HEK293 (cell line): ENCODE measurements at regions of chr6 and their contacts with region 1.

Region 1: DNA sequence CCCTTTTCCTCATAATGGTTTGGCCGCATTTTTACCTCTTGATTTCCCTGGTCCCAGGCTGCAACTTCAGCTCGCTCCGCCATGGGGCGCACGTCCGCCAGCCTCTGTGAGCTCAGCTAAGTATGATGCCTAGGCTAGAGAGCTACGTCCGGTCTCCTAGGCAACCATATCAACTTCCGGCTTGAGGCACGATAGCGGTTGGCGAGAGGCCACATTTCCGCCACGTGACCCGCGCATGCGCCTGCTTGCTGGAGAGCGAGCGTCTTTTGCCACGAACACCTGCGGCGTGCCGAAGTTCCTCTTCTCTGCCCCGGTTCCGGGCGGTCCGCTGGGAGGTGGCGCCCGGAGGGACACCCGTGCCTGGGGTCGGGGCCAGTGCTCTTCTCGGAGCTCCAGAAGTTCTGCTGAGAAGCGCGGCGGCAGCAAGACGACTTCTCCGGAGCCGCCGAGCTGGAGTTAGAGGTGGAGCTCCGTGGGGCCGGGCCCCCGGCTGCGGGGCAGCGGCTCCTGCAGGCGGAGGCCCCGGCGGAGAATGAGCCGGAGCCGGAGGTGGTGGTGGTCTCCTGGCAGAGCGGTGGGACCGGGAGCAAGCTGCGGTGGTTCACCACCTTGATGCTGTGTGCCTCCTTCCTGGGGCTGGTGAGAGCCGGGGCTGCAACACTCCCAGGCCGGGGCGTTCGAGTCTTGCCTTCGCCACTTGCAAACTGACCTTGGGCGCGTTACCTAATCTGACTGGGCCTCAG is 172.0 kb downstream of the SLC16A10 start:
- H3K4me3 ChIP-seq: peak overlapping the region; percentile 82
- H3K27ac ChIP-seq: peak overlapping the region; percentile 58
- H3K4me1 ChIP-seq: no peaks in the 10 kb centered on the region
- CTCF ChIP-seq: peak; percentile 95

Region 2: DNA sequence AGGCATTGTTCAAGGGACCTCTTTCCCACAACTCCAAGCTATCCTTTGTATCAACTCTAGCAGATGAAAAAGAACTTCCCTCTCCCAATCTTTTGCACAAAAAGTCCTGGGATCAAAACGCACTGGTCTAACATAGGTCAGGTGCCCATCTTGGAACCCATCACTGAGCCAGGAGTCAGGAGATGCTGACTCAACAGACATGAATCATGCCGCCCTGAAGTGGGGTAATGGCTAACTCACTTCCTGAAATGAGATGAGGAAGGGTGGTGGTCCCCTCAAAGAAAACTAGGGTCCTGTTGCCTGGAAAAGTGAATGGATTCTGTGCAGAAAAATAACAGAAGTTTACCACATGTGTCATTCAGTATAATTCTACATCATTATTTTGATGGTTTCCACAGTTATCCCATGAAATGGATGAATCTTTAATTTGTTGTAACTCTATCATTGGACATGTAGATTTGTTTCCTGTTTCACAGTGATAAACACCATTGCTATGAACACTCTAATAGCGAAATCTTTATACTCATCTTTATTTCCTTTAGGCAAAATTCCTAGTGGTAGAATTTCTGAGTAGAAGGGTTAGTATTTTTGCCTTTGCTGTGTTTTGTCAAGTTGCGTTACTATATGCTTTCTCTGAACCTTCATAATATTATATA is 20.7 kb before region 1 on chr6:
- CTCF ChIA-PET with region 1: interaction called, 11 read pairs
- POLR2A ChIA-PET with region 1: interaction called, 4 read pairs
- H3K4me3 ChIP-seq: no peak overlapping the region
- H3K27ac ChIP-seq: no peak overlapping the region
- H3K4me1 ChIP-seq: no peaks in the 10 kb centered on the region
- CTCF ChIP-seq: no peak

Region 3: GRCh38 chr6:111483736-111484632 is 224.7 kb after region 1 on chr6:
- CTCF ChIA-PET with region 1: interaction called, 26 read pairs
- POLR2A ChIA-PET with region 1: interaction called, 17 read pairs
- H3K4me3 ChIP-seq: peak overlapping the region; percentile 70
- H3K27ac ChIP-seq: peak overlapping the region; percentile 100
- H3K4me1 ChIP-seq: peaks cover 8% of the 10 kb centered on the region
- CTCF ChIP-seq: no peak

Region 4: GRCh38 chr6:111642463-111643158 is 383.4 kb after region 1 on chr6:
- CTCF ChIA-PET with region 1: interaction called, 32 read pairs
- POLR2A ChIA-PET with region 1: interaction called, 8 read pairs
- H3K4me3 ChIP-seq: no peak overlapping the region
- H3K27ac ChIP-seq: no peak overlapping the region
- H3K4me1 ChIP-seq: no peaks in the 10 kb centered on the region
- CTCF ChIP-seq: peak; percentile 58

Region 5: GRCh38 chr6:112043032-112044007 is 784.1 kb after region 1 on chr6:
- CTCF ChIA-PET with region 1: interaction called, 15 read pairs
- POLR2A ChIA-PET with region 1: interaction called, 6 read pairs
- H3K4me3 ChIP-seq: peak overlapping the region; percentile 66
- H3K27ac ChIP-seq: peak overlapping the region; percentile 27; the same call in 1 of the 2 replicates
- H3K4me1 ChIP-seq: no peaks in the 10 kb centered on the region
- CTCF ChIP-seq: peak; percentile 86